Left ventricle myocardium superior (tissue), 1 donor: ENCODE measurements at regions of chr3 and their contacts with region 1.

Region 1: GRCh38 chr3:188348435-188349244 is 194.7 kb downstream of the LPP start:
- DNase-seq: peak; percentile 89
- ATAC-seq: peak; percentile 80

Region 2: GRCh38 chr3:188205992-188206416 is 142.6 kb before region 1 on chr3:
- intact Hi-C with region 1: no loop called
- DNase-seq: no peak
- ATAC-seq: no peak

Region 3: DNA sequence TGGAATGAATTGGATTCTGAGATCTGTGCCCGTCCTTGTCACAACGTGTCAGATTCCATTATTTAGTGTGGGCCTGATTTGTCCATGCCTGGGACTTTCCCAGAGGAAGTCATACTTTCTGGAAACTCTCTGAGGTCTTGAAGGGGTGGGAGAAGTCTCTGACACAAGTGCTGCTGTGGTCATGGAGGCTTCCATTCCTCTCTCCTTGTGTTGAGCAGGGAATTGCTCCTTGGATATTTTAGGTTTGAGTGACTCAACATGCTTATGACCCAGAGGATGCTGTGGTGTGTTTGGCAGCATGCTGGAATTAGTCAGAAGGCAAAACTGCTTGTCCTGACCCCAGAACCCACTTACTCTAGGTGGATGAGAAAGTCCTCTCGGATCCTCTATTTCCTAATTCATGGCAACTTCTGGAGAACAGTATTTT is 62.5 kb before region 1 on chr3:
- intact Hi-C with region 1: loop called (anchors 2 kb)
- DNase-seq: no peak
- ATAC-seq: peak; percentile 77

Region 4: GRCh38 chr3:188947401-188948280 is 599.0 kb after region 1 on chr3:
- intact Hi-C with region 1: loop called (anchors 10 kb)
- DNase-seq: peak; percentile 93
- ATAC-seq: peak; percentile 91